BJ (cell line): ENCODE measurements at regions of chr18 and their contacts with region 1.

Region 1: GRCh38 chr18:45801416-45802004 is 24.0 kb upstream of the SIGLEC15 start:
- DNase-seq: no peak
- H3K4me3 ChIP-seq: no peak overlapping the region
- H3K27me3 ChIP-seq: no peaks in the 10 kb centered on the region
- CTCF ChIP-seq: no peak

Region 2: DNA sequence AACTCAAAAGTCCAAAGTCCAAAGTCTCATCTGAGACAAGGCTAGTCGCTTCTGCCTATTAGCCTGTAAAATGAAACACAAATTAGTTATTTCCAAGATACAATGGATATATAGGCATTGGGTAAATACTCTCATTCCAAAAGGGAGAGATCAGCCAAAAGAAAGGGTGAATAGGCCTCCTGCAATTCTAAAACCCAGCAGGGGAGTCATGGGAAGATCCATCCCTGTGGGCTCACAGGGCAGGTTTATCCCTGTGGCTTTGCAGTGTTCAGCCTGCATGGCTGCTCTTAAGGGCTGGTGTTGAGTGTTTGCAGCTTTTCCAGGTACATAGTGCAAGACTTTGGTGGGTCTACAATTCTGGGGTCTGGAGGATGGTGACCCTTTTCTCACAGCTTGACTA is 98.6 kb before region 1 on chr18:
- CTCF ChIA-PET with region 1: no interaction called
- POLR2A ChIA-PET with region 1: no interaction called
- DNase-seq: no peak
- H3K4me3 ChIP-seq: no peak overlapping the region
- H3K27me3 ChIP-seq: no peaks in the 10 kb centered on the region
- CTCF ChIP-seq: no peak

Region 3: DNA sequence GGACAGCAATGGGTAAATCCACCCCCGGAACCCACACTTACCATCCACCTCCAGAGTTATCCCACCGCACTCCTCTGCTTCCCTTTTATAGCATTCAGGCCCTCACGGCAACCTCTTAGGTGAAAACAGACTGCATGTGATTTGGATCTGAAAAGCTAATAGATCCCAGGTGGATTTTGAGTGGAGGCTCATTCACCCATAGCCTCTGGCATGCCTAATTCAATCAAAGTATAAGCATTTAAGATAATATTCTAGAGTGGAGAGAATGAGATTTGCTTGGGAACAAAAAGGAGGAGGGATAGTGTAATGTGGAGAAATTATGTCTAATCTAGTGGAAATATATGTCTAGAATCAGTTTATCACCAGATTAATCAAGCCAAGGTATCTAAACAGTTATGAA is 60.5 kb before region 1 on chr18:
- CTCF ChIA-PET with region 1: no interaction called
- POLR2A ChIA-PET with region 1: interaction called, 10 read pairs
- DNase-seq: no peak
- H3K4me3 ChIP-seq: no peak overlapping the region
- H3K27me3 ChIP-seq: no peaks in the 10 kb centered on the region
- CTCF ChIP-seq: no peak